ENCODE measurements at regions of chr11 and their contacts with region 1.

Region 1: GRCh38 chr11:128472128-128473089 is 114.9 kb downstream of the ETS1 start:
- DNase-seq: peak; percentile 93
- ATAC-seq: peak; percentile 78
- H3K4me3 ChIP-seq: peak overlapping the region; percentile 41; the same call in 1 of the 2 replicates
- H3K27ac ChIP-seq: peak overlapping the region; percentile 91
- H3K4me1 ChIP-seq: peaks cover 92% of the 10 kb centered on the region
- H3K27me3 ChIP-seq: no peaks in the 10 kb centered on the region
- CTCF ChIP-seq: no peak
- EP300 ChIP-seq: peak; percentile 76 to 78; a peak in 3 of 4 replicates
- POLR2A ChIP-seq: peak; percentile 75
- RAD21 ChIP-seq: peak; percentile 25; the same call in 1 of the 2 replicates

Region 2: DNA sequence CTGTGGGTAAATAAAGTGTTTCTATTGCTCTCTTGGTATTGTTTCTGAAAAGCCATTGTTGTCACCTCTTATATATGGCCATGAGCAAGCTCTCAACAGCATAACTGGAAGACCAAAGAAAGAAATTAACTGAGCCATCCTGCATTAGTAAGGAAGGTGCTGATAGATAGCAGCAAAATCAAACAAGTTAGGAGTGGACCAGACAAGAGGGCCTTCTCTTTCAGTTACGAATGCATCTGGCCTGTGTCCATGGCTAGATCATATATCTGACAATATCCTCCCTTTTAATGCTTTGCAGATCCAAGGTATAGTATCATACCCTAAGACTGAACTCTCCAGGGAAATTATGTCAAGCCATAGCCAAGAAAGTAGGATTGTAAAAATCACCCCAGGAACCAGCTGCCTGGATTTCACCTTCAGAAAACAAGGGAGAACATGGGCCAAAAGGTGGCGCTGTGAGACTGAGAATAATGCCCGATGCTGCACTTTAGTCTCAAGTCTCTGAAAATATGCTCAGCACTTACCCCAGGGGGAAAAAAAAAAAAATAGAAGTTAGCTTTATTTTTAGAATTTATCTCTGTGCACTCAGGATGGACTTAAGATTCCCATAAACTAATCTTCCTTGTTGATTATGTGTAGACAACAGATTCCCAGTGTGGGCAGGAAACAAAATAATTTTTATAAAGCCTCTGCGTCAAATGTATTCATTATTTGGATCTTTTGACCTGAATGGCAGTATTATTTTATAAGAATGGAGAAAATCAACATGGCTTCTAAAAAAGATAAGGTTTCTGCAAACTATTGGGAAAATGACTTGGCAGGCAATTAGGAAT is 300.1 kb before region 1 on chr11:
- CTCF ChIA-PET with region 1: no interaction called
- POLR2A ChIA-PET with region 1: no interaction called
- RAD21 ChIA-PET with region 1: interaction called, 4 read pairs
- SMC1A ChIA-PET with region 1: no interaction called
- in situ Hi-C with region 1: no loop called
- intact Hi-C with region 1: loop called (anchors 10 kb)
- DNase-seq: peak; percentile 38
- ATAC-seq: peak; percentile 93
- H3K4me3 ChIP-seq: no peak overlapping the region
- H3K27ac ChIP-seq: no peak overlapping the region
- H3K4me1 ChIP-seq: no peaks in the 10 kb centered on the region
- H3K27me3 ChIP-seq: no peaks in the 10 kb centered on the region; a peak in 2 of 4 replicates
- CTCF ChIP-seq: peak; percentile 68 to 91 (median 72)
- EP300 ChIP-seq: no peak
- POLR2A ChIP-seq: no peak
- RAD21 ChIP-seq: peak; percentile 97

Region 3: DNA sequence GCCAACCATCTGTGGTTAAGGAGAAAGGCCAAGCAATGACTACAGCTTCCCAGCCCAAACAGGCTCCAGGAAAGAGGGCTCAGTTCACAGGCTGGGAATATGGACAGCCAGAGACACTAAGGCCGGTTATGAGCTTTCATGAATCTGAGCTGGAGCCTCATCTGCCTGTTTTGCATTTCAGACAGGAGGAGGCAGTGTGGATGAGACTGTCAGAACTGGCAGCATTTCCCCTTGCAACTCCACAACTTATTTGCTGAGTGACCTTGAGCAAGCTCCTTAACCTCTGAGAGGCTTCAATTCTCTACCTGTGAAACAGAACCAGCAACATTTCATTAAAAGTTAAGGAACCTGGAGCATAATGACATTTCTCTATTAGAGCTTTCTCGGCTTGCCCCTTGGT is 149.0 kb before region 1 on chr11:
- CTCF ChIA-PET with region 1: interaction called, 3 read pairs
- POLR2A ChIA-PET with region 1: interaction called, 3 read pairs
- RAD21 ChIA-PET with region 1: interaction called, 16 read pairs
- SMC1A ChIA-PET with region 1: interaction called, 9 read pairs
- in situ Hi-C with region 1: no loop called
- intact Hi-C with region 1: loop called (anchors 5 kb)
- DNase-seq: no peak
- ATAC-seq: peak; percentile 43
- H3K4me3 ChIP-seq: no peak overlapping the region
- H3K27ac ChIP-seq: no peak overlapping the region
- H3K4me1 ChIP-seq: peaks cover 11% of the 10 kb centered on the region
- H3K27me3 ChIP-seq: no peaks in the 10 kb centered on the region
- CTCF ChIP-seq: peak; percentile 41 to 46 (median 45); a peak in 5 of 6 replicates
- EP300 ChIP-seq: no peak
- POLR2A ChIP-seq: no peak
- RAD21 ChIP-seq: peak; percentile 74

Region 4: GRCh38 chr11:128458321-128458720 is 14.1 kb before region 1 on chr11:
- CTCF ChIA-PET with region 1: interaction called, 4 read pairs
- POLR2A ChIA-PET with region 1: no interaction called
- RAD21 ChIA-PET with region 1: no interaction called
- SMC1A ChIA-PET with region 1: interaction called, 18 read pairs
- in situ Hi-C with region 1: no loop called
- intact Hi-C with region 1: no loop called
- DNase-seq: no peak
- ATAC-seq: no peak
- H3K4me3 ChIP-seq: no peak overlapping the region
- H3K27ac ChIP-seq: no peak overlapping the region
- H3K4me1 ChIP-seq: no peaks in the 10 kb centered on the region
- H3K27me3 ChIP-seq: no peaks in the 10 kb centered on the region
- CTCF ChIP-seq: no peak
- EP300 ChIP-seq: no peak
- POLR2A ChIP-seq: no peak
- RAD21 ChIP-seq: no peak

Region 5: DNA sequence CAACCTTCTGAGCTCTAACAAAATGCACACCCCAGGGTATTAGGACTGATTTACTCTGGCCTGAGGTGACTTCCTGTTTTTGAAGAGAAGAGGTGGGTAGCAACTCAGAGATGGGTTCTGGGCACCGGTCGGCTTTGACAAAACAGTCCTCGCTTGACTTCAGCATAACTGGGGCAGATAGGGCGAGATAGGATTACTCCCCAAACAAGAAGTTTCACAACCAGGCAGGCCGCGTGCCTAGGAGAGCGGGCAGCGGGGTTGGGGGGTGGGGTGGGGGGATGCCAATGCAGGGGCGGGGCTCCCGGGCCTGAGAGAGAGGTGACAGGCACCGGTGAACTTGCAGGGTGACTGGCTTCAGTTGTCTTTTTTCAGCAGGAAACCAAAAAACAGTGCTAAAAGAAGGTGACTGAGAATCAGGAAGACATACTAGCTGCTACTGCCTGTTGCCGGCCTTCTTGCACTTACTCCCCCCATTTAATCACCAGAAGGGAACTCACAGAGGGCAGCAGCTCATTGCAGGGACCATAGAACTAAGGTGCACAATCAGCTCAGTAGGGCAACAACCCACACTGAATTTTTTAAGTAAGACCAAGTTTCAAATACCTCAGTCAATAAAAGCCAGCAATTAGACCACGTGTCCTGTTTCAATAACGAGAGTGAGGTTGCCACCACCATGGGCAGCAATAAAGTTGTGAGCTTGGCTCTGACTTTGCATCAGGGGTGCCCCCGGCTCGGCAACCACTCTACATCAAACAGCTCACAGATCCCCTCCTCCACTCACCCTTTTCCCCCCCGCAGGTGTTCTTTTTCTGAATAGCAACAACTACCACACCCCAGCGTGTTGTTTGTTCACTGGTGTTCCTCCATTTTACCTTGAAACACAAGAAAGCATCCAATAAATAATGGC is 152.1 kb after region 1 on chr11:
- CTCF ChIA-PET with region 1: interaction called, 4 read pairs
- POLR2A ChIA-PET with region 1: no interaction called
- RAD21 ChIA-PET with region 1: interaction called, 30 read pairs
- SMC1A ChIA-PET with region 1: interaction called, 52 read pairs
- in situ Hi-C with region 1: no loop called
- intact Hi-C with region 1: no loop called
- DNase-seq: no peak
- ATAC-seq: peak; percentile 77
- H3K4me3 ChIP-seq: no peak overlapping the region
- H3K27ac ChIP-seq: peak overlapping the region; percentile 86
- H3K4me1 ChIP-seq: peaks cover 66% of the 10 kb centered on the region
- H3K27me3 ChIP-seq: no peaks in the 10 kb centered on the region
- CTCF ChIP-seq: no peak
- EP300 ChIP-seq: peak in 1 of 2 experiments; percentile 21; a peak in 1 of 4 replicates
- POLR2A ChIP-seq: no peak
- RAD21 ChIP-seq: no peak

Measured in GM12878 (cell line).